Mammary epithelial cell (primary cell): ENCODE measurements at regions of chr22 and their contacts with region 1.

Region 1: GRCh38 chr22:49179175-49179574 is 648.5 kb downstream of the BRD1 start:
- DNase-seq: no peak
- H3K4me3 ChIP-seq: no peak overlapping the region
- H3K27ac ChIP-seq: no peak overlapping the region
- H3K4me1 ChIP-seq: no peaks in the 10 kb centered on the region
- H3K27me3 ChIP-seq: no peaks in the 10 kb centered on the region
- CTCF ChIP-seq: no peak

Region 2: DNA sequence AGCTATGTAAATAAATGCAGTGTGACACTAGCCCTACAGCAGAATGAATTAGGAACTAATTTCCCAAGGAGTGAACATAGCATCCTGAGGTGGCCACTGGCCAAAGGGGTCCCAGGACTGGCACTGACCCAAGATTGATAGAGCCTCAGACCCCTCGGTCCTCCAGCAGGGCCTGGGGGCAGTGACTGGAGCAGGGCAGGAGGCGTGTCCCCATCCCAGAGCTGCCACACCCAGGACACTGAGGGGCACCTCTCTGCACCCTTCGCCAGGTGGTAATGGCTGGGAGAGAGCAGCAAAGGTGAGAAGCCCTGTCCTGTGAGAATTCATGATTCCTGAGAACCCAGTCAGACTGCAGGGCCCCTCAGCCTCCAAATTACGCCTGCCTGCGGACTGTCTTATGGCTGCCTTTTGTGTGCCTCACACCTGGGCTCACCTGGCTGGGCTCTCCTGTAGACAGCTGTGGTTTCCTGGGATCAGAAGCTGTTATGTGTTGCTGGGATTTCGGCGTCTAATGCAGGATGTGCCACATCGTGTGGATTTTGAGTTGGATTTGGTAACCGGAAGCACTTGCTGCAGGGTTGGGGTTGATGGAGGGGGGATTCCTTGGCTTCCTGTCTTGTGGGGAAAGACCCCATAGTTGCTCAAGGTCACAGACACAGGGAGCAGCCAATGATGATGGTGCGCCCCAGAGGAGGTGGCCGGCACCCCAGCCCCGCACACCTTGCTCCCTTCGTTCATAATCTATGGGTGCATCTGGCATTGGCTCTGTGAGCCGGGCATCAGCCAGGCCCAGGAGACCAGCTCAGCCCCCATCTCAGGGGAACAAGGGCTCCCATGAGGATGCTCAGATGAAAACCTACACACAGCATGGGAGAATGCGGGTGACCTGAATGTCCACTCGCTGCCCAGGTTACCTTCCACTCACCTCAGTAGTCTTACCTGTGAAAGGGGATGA is 65.6 kb after region 1 on chr22:
- CTCF ChIA-PET with region 1: no interaction called
- dilution Hi-C with region 1: loop called (anchors 5 kb)
- in situ Hi-C with region 1: no loop called
- intact Hi-C with region 1: no loop called
- DNase-seq: no peak
- H3K4me3 ChIP-seq: no peak overlapping the region
- H3K27ac ChIP-seq: no peak overlapping the region
- H3K4me1 ChIP-seq: no peaks in the 10 kb centered on the region
- H3K27me3 ChIP-seq: no peaks in the 10 kb centered on the region
- CTCF ChIP-seq: no peak